Activated CD8-positive, alpha-beta T cell treated with anti-CD3 and anti-CD28 coated beads, Interleukin-2, amount 10 ng/mL, durations not matched to agents 7 days and 5 days (primary cell): ENCODE measurements at regions of chr16 and their contacts with region 1.

Region 1: GRCh38 chr16:23435500-23435899 is 17.5 kb downstream of the COG7 start:
- DNase-seq: peak; percentile 81
- ATAC-seq: peak; percentile 95
- H3K4me3 Mint-ChIP-seq: no peak overlapping the region
- H3K27ac Mint-ChIP-seq: no peak overlapping the region
- H3K4me1 Mint-ChIP-seq: no peaks in the 10 kb centered on the region
- H3K27me3 Mint-ChIP-seq: no peaks in the 10 kb centered on the region

Region 2: DNA sequence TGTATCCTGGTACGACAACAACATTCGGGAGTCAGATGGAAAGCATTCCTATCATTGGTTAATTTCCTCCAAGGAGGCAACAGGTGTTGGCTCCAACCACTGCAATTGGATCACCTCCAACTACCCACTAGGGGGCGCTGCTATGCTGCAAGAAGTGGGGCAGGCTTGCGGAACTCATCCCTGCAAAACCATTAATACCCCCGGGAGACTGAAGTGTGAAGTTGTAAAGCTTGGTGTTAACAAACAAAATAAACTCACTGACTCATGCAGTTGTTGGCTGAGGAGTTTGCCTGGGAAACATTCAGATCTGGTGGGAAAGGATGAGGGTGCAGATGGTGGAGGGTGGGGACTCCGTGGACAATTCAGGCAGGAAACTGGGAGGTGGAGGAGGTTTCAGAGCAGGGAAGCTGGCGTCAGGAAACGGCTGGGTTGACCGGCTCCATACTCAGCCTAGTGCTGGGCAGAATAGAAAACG is 536.6 kb before region 1 on chr16:
- CTCF ChIA-PET with region 1: interaction called, 11 read pairs
- POLR2A ChIA-PET with region 1: no interaction called
- DNase-seq: peak; percentile 72
- ATAC-seq: no peak
- H3K4me3 Mint-ChIP-seq: no peak overlapping the region
- H3K27ac Mint-ChIP-seq: no peak overlapping the region
- H3K4me1 Mint-ChIP-seq: no peaks in the 10 kb centered on the region
- H3K27me3 Mint-ChIP-seq: peaks cover 2% of the 10 kb centered on the region

Region 3: DNA sequence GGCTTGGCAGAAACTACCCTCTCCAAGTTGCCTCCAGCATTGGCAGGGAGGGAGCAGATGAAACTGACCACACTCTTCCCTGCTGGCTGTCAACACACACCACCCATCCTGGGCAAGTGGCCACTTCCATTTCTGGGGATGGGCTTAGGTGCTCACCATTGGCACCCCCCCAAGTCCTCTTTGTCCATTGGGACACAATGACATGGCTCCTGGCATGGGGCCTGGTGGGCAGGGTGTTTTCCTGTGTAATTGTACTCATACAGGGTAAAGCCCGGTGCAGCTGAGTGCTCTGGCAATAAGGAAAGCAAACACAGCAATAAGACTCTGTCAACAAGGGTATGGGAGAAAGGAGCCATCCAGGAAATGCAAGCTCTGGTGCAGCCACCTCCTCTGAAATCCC is 110.8 kb before region 1 on chr16:
- CTCF ChIA-PET with region 1: no interaction called
- POLR2A ChIA-PET with region 1: no interaction called
- DNase-seq: no peak
- ATAC-seq: no peak
- H3K4me3 Mint-ChIP-seq: no peak overlapping the region
- H3K27ac Mint-ChIP-seq: no peak overlapping the region
- H3K4me1 Mint-ChIP-seq: no peaks in the 10 kb centered on the region
- H3K27me3 Mint-ChIP-seq: peaks cover 2% of the 10 kb centered on the region

Region 4: GRCh38 chr16:23359092-23359760 is 76.3 kb before region 1 on chr16:
- CTCF ChIA-PET with region 1: no interaction called
- POLR2A ChIA-PET with region 1: no interaction called
- DNase-seq: no peak
- ATAC-seq: no peak
- H3K4me3 Mint-ChIP-seq: no peak overlapping the region
- H3K27ac Mint-ChIP-seq: no peak overlapping the region
- H3K4me1 Mint-ChIP-seq: no peaks in the 10 kb centered on the region
- H3K27me3 Mint-ChIP-seq: no peaks in the 10 kb centered on the region

Region 5: DNA sequence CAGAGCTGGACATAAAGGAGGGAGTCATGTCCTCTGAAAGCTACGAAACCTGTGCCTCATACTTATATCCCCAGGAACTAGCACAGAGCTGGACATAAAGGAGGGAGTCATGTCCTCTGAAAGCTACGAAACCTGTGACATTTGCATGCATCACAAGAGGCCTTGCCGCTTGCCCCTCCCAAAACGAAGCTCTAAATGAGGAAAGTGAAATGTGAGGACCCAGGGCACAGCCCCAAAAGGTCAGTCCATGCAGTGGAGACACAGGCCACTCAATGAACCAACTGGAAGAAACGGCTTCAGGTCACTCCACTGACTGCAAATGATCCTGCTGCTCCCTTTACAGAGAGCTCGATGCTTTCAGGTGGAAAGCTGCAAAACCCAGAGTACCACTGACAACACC is 20.8 kb before region 1 on chr16:
- CTCF ChIA-PET with region 1: interaction called, 31 read pairs
- POLR2A ChIA-PET with region 1: no interaction called
- DNase-seq: no peak
- ATAC-seq: no peak
- H3K4me3 Mint-ChIP-seq: no peak overlapping the region
- H3K27ac Mint-ChIP-seq: no peak overlapping the region
- H3K4me1 Mint-ChIP-seq: no peaks in the 10 kb centered on the region
- H3K27me3 Mint-ChIP-seq: no peaks in the 10 kb centered on the region

Region 6: GRCh38 chr16:23452572-23453337 is 17.3 kb after region 1 on chr16 and contains the start of gene COG7:
- CTCF ChIA-PET with region 1: interaction called, 39 read pairs
- POLR2A ChIA-PET with region 1: no interaction called
- DNase-seq: peak; percentile 90
- ATAC-seq: peak; percentile 91
- H3K4me3 Mint-ChIP-seq: peak within 1 kb of the TSS; percentile 89
- H3K27ac Mint-ChIP-seq: peak within 1 kb of the TSS; percentile 82
- H3K4me1 Mint-ChIP-seq: peaks cover 18% of the 10 kb centered on the region
- H3K27me3 Mint-ChIP-seq: no peaks in the 10 kb centered on the region
- total RNA-seq, gene COG7: 20.0 to 21.5 TPM

Region 7: DNA sequence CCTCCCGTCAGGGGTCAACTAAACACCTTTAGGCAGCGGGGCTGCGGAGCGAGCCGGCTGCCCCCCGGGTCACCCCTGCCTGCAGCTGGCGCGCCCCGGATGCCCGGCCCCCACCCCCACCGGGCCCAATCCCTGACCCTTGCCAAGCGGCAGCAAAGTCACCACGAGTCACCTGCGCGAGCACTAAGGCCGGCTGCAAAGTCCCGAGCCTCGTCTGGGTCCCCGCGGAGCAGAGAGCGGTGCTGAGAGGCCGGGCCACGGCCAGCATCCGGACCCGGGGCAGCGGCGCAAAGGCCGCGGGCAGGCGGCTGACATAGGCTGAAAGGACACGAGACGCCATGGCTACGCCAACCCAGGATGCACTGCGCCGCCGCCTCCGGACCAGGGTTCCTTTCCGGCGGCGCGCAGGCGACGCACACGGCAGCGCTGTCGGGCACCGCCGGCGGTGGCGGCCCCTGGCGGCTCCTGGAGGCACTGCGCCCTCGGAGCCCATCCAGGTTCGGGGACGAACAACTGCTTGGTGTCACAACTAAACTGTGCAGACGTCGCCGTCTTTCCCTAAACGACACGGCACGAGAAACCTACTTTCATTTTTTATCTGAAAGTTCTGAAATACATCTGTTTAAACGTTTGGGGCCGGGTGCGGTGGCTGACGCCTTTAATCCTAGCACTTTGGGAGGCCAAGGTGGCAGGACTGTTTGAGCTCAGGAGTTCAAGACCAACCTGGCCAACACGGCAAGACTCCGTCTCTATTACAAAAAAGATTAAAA is 160.6 kb after region 1 on chr16 and contains the start of gene NDUFAB1:
- CTCF ChIA-PET with region 1: interaction called, 15 read pairs
- POLR2A ChIA-PET with region 1: no interaction called
- DNase-seq: peak; percentile 93
- ATAC-seq: peak; percentile 99
- H3K4me3 Mint-ChIP-seq: peak within 1 kb of the TSS; percentile 89
- H3K27ac Mint-ChIP-seq: peak within 1 kb of the TSS; percentile 80
- H3K4me1 Mint-ChIP-seq: peaks cover 29% of the 10 kb centered on the region
- H3K27me3 Mint-ChIP-seq: no peaks in the 10 kb centered on the region
- total RNA-seq, gene NDUFAB1: 100 to 105 TPM